B cell (primary cell): ENCODE measurements at regions of chr15 and their contacts with region 1.

Region 1: DNA sequence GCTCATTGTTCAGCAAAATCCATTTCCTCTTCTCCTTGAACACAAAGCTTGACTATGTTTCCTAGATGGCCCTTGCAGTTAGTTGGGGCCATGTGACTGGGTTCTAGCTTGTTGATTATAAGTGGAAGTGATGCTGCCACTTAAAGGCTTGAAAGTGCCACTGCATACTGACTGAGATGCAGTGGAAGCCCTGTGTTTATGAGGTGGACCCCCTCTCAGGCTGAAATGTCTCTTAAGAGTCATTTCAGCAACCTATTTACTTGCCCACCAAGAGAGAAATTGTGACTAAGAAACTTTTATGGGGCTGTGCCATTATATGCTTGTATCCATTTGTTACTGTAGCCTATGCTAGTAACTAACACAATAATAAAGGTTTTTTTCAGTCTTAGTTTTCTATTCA is 8.4 kb upstream of the ANP32A start:
- DNase-seq: peak; percentile 61
- ATAC-seq: peak; percentile 64
- H3K4me3 ChIP-seq: no peak overlapping the region
- H3K4me3 Mint-ChIP-seq: no peak overlapping the region
- H3K27ac ChIP-seq: no peak overlapping the region
- H3K27ac Mint-ChIP-seq: no peak overlapping the region
- H3K4me1 ChIP-seq: no peaks in the 10 kb centered on the region
- H3K4me1 Mint-ChIP-seq: no peaks in the 10 kb centered on the region
- H3K27me3 ChIP-seq: peaks cover 0 to 6% (median under 1%) of the 10 kb centered on the region in 4 experiments
- H3K27me3 Mint-ChIP-seq: peaks cover 12% of the 10 kb centered on the region
- CTCF ChIP-seq: peak; percentile 75

Region 2: DNA sequence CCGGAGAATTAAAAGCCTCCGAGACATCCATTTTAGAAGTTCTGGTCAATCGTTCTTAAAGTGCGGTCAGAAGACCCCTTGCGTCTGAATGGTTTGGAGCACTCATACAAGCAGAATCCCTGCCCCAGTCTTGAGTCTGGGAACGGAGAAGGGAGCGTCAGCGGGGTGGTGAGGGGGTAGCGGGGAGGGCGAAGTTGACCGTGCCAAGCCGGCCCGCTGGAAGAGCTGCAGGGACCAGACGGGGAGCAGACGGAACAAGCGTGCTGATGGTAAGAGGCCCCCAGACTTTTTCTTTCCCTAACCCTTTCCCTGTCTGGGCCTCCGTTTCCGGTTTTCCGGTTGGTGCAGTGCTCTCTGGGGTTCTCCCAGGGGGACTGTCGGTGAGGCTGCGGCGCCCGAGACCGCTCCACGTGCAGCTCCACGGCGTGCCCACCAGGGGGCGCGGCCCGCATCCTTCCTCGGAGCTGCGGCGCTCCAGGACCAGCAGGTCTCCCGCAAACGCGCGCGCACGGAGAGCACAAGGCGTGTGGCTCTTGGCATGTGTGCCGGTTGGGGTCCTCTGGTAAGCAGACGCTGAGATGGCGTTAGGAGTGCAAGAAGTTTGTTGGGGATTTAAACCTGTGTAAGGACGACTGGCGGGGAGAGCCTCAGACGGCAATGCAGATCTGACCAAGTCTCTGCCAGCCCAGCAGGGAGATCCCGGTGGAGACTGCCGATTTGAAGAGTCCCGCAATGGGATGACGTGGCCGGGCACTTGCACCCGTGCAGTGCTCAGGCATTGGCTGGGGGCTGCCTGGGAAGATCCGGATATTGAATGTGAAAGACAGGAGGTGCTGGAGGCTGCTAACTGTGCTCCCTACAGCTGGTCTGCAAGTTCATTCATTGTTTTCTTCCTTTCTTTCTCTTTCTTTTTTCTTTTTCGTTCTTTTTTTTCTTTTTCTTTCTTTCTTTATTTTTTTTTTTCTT is 269.4 kb before region 1 on chr15:
- CTCF ChIA-PET with region 1: interaction called, 13 read pairs
- POLR2A ChIA-PET with region 1: no interaction called
- intact Hi-C with region 1: loop called (anchors 1 kb)
- DNase-seq: peak; percentile 86
- ATAC-seq: peak; percentile 96
- H3K4me3 ChIP-seq: peak overlapping the region; percentile 33 to 58 (median 49)
- H3K4me3 Mint-ChIP-seq: peak overlapping the region; percentile 91
- H3K27ac ChIP-seq: no peak overlapping the region
- H3K27ac Mint-ChIP-seq: peak overlapping the region; percentile 46
- H3K4me1 ChIP-seq: peaks cover 25 to 34% of the 10 kb centered on the region in 2 donors
- H3K4me1 Mint-ChIP-seq: peaks cover 23% of the 10 kb centered on the region
- H3K27me3 ChIP-seq: peaks cover 0 to 30% (median 6%) of the 10 kb centered on the region in 4 experiments
- H3K27me3 Mint-ChIP-seq: peaks cover 43% of the 10 kb centered on the region
- CTCF ChIP-seq: peak; percentile 95

Region 3: DNA sequence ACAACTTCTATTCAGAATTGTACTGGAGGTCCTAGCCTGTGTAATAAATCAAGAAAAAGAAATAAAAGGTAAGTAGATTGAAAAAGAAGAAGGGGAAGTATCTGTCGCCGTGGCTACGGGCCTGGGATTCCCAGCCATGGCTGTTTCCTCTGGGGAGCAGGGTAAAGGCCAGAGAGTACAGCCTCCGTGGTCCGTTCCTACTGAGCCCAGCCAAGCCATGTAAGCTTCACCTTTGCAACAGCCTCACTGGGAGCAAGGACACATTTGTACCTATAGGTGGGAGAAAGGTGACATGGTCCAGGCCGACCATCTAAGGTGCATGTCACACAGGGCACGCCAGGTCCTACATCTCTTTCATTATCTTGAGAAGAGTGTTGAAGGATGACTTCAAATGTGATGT is 79.7 kb before region 1 on chr15:
- CTCF ChIA-PET with region 1: no interaction called
- POLR2A ChIA-PET with region 1: no interaction called
- intact Hi-C with region 1: no loop called
- DNase-seq: no peak
- ATAC-seq: no peak
- H3K4me3 ChIP-seq: no peak overlapping the region
- H3K4me3 Mint-ChIP-seq: no peak overlapping the region
- H3K27ac ChIP-seq: no peak overlapping the region
- H3K27ac Mint-ChIP-seq: no peak overlapping the region
- H3K4me1 ChIP-seq: no peaks in the 10 kb centered on the region
- H3K4me1 Mint-ChIP-seq: peaks cover 1% of the 10 kb centered on the region
- H3K27me3 ChIP-seq: no peaks in the 10 kb centered on the region
- H3K27me3 Mint-ChIP-seq: no peaks in the 10 kb centered on the region
- CTCF ChIP-seq: no peak

Region 4: DNA sequence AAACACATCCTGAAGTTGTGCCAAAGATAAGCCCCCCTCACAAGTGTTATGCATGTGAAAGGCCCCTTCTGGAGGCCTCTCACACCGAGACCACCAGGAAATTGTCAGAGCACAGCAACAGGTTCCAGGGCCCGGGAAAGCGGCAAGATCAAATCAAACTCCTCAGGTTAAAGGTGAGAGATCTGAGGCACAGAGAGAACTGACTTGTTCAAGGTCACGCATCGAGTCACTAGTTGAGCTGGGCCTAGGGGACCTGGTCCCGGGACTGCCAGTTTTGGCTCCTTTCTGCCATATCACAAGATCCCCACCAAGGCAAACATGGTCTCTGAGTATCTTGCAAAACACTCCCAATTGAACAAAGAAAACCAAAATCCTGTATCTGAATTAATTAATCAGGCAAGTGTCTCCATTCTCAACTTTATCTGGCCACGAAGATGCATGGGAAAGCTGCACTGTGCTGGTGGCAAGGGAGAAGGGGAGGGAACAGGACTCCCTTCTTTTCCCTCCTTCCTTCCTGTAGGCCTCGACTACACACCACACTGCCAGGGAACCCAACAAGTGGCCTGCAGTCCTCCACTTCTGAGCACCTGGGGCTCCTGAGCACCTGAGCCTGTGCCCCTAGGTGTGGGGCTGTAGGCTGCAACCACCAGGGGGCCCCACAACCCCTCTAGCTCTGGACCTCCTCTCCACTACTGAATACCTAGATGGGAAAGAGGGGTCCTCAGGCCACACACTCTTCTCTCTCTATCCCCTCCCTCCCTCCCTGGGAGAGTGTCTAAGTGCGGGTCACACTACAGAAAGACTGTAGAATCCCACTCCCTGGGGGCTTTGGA is 45.6 kb before region 1 on chr15:
- CTCF ChIA-PET with region 1: interaction called, 107 read pairs
- POLR2A ChIA-PET with region 1: no interaction called
- intact Hi-C with region 1: loop called (anchors 1 kb)
- DNase-seq: peak; percentile 74
- ATAC-seq: peak; percentile 84
- H3K4me3 ChIP-seq: no peak overlapping the region
- H3K4me3 Mint-ChIP-seq: no peak overlapping the region
- H3K27ac ChIP-seq: peak overlapping the region in 1 of 2 donors; percentile 10
- H3K27ac Mint-ChIP-seq: peak overlapping the region; percentile 50
- H3K4me1 ChIP-seq: peaks cover 30 to 32% of the 10 kb centered on the region in 2 donors
- H3K4me1 Mint-ChIP-seq: peaks cover 32% of the 10 kb centered on the region
- H3K27me3 ChIP-seq: no peaks in the 10 kb centered on the region
- H3K27me3 Mint-ChIP-seq: no peaks in the 10 kb centered on the region
- CTCF ChIP-seq: peak; percentile 82

Region 5: GRCh38 chr15:68795298-68795848 is 33.7 kb before region 1 on chr15:
- CTCF ChIA-PET with region 1: interaction called, 12 read pairs
- POLR2A ChIA-PET with region 1: no interaction called
- intact Hi-C with region 1: no loop called
- DNase-seq: peak; percentile 76
- ATAC-seq: peak; percentile 75
- H3K4me3 ChIP-seq: peak overlapping the region in 2 of 5 experiments; percentile 17 to 28
- H3K4me3 Mint-ChIP-seq: peak overlapping the region; percentile 73
- H3K27ac ChIP-seq: peak overlapping the region; percentile 58 to 74
- H3K27ac Mint-ChIP-seq: peak overlapping the region; percentile 80
- H3K4me1 ChIP-seq: peaks cover 68 to 82% of the 10 kb centered on the region in 2 donors
- H3K4me1 Mint-ChIP-seq: peaks cover 93% of the 10 kb centered on the region
- H3K27me3 ChIP-seq: no peaks in the 10 kb centered on the region
- H3K27me3 Mint-ChIP-seq: no peaks in the 10 kb centered on the region
- CTCF ChIP-seq: no peak

Region 6: GRCh38 chr15:69104050-69104750 is 275.1 kb after region 1 on chr15:
- CTCF ChIA-PET with region 1: no interaction called
- POLR2A ChIA-PET with region 1: no interaction called
- intact Hi-C with region 1: no loop called
- DNase-seq: no peak
- ATAC-seq: no peak
- H3K4me3 ChIP-seq: no peak overlapping the region
- H3K4me3 Mint-ChIP-seq: no peak overlapping the region
- H3K27ac ChIP-seq: no peak overlapping the region
- H3K27ac Mint-ChIP-seq: no peak overlapping the region
- H3K4me1 ChIP-seq: no peaks in the 10 kb centered on the region
- H3K4me1 Mint-ChIP-seq: no peaks in the 10 kb centered on the region
- H3K27me3 ChIP-seq: no peaks in the 10 kb centered on the region
- H3K27me3 Mint-ChIP-seq: peaks cover 14% of the 10 kb centered on the region
- CTCF ChIP-seq: no peak

Region 7: DNA sequence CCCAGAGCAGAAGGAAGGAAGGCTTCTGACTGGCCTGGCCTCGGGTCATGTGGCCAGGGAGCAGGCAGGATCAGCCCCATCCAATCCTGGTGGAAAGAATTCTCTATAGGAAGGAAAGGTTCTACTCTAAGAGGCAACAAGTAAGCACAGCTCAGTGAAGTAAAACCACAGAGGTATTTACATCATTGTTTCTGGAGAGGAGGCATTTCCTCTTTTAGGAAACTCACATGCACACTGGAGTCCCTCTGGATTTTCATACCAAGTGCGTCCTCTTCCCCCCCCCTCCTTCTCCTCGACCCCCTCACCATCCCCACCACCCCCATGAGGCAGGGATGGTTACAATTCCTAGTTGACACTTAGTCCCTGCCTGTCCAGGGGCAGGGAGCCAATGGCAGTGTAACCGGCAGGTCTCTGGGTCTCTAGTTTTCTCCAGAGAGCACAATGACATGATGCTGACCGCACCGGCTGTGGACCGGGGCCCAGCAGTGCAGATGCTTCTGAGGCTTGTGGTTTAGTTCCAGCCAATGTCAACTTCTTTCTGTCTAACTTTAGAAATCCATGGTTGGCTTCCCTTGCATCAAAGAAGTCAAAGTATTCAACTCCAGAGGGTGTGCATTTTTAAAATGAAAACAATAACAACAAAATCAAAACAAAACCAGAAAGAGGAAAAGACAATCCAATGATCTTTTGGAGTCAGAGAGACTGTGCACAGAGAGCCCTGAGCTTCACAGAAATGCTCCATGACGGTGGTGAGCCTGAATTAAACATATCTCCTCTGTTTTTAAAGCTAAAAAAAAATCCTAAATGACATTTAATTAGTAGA is 1499.0 kb after region 1 on chr15:
- CTCF ChIA-PET with region 1: no interaction called
- POLR2A ChIA-PET with region 1: interaction called, 11 read pairs
- intact Hi-C with region 1: no loop called
- DNase-seq: peak; percentile 77
- ATAC-seq: peak; percentile 90
- H3K4me3 ChIP-seq: no peak overlapping the region
- H3K4me3 Mint-ChIP-seq: peak overlapping the region; percentile 62
- H3K27ac ChIP-seq: peak overlapping the region; percentile 32 to 39
- H3K27ac Mint-ChIP-seq: peak overlapping the region; percentile 74
- H3K4me1 ChIP-seq: peaks cover 22 to 32% of the 10 kb centered on the region in 2 donors
- H3K4me1 Mint-ChIP-seq: peaks cover 33% of the 10 kb centered on the region
- H3K27me3 ChIP-seq: no peaks in the 10 kb centered on the region
- H3K27me3 Mint-ChIP-seq: no peaks in the 10 kb centered on the region
- CTCF ChIP-seq: no peak